ENCODE measurements at regions of chr17 and their contacts with region 1.

Region 1: DNA sequence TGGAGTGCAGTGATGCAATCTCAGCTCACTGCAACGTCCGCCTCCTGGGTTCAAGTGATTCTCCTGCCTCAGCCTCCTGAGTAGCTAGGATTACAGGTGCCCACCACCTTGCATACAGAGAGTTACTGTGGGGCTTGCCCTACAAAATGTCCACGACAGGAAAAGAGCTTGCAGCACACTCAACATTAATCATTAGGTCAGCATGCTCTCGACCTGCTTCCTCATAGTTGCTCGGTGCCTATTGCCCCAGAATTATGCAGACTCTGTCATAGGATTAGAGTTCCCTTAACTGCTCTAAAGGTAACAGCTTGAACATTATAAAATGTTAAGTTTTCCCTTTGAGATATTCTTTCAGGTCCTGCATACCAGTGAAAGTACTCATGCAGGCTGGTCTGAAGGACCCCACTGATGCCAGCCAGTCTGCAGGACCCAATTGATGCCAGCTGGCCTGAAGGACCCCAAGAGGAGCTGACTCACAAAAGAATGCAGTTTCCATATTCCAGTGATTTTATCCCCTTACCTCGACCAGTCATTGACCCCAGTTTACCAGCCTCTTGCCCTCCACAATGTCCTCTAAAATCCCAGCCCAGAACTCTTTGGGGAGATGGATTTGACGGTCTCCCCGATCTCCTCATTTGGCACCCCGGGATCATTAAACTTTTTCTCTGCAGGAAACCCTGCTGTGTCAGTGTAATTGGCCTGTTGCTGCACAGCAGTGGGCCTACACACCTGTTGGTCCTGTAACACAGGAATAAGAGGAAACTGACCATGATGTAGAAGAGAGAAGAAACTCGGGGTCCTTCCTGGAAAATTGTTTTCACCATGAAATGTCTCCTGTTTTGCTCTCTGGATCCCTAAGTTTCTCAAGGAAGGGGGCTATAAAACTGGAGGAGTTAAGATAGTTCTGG is 10.7 kb downstream of the ICAM2 start:
- H3K4me3 Mint-ChIP-seq: no peak overlapping the region
- H3K27ac Mint-ChIP-seq: peak overlapping the region; percentile 80
- H3K4me1 Mint-ChIP-seq: peaks cover 49% of the 10 kb centered on the region
- H3K27me3 Mint-ChIP-seq: no peaks in the 10 kb centered on the region

Region 2: DNA sequence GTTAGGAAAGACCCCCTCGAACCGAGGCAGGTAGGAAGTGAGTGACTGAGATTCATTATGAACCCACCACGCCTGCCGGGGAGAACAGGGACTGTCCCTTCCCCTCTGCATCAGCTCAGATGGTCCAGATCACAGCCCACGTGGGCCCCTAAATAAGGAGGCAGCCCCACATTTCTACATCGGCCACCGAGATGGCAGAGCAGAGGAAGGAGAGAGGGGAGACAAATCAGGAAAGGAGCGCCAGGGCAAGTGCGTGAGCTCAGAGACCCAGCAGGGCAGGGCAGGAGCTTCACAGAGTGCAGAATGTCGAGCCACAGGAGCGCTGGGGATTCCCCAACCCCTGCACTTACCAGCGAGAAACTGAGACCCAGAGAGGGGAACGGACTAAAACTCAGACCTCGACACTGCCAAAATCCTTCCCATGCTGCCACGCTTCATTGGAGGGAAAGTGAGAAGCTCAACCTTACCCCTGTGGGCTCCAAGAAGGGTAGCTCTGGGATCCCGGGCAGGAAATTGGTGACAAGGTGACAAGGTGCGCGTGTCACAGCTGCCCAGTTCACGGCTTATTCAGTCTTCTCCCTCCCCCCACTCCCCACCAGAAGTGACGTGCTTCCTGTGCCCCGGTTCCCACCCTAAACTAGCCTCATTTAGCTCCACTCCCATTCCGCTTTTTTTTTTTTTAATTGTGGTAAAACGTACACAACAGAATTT is 10.5 kb after region 1 on chr17 and contains the start of gene ICAM2:
- intact Hi-C with region 1: loop called (anchors 1 kb)
- H3K4me3 Mint-ChIP-seq: peak within 1 kb of the TSS; percentile 79
- H3K27ac Mint-ChIP-seq: peak within 1 kb of the TSS; percentile 90
- H3K4me1 Mint-ChIP-seq: peaks cover 48% of the 10 kb centered on the region
- H3K27me3 Mint-ChIP-seq: no peaks in the 10 kb centered on the region